Motor neuron (in vitro differentiated cells): ENCODE measurements at regions of chr9 and their contacts with region 1.

Region 1: GRCh38 chr9:120730661-120731514 is 16.6 kb upstream of the MEGF9 start:
- ATAC-seq: peak in 7 of 8 experiments; percentile 37 to 83 (median 55)
- H3K4me3 ChIP-seq: no peak overlapping the region
- H3K27ac ChIP-seq: peak overlapping the region in 1 of 2 donors; percentile 44
- H3K4me1 ChIP-seq: peaks cover 5 to 7% of the 10 kb centered on the region in 2 donors

Region 2: GRCh38 chr9:120619751-120620655 is 110.9 kb before region 1 on chr9:
- in situ Hi-C with region 1: loop called in 1 of 9 experiments (anchors 10 kb)
- ATAC-seq: peak in 6 of 8 experiments; percentile 62 to 90 (median 80)
- H3K4me3 ChIP-seq: no peak overlapping the region
- H3K27ac ChIP-seq: no peak overlapping the region
- H3K4me1 ChIP-seq: no peaks in the 10 kb centered on the region

Region 3: GRCh38 chr9:121009650-121010049 is 278.8 kb after region 1 on chr9:
- in situ Hi-C with region 1: no loop called
- ATAC-seq: no peak
- H3K4me3 ChIP-seq: no peak overlapping the region
- H3K27ac ChIP-seq: no peak overlapping the region
- H3K4me1 ChIP-seq: no peaks in the 10 kb centered on the region